Activated CD4-positive, alpha-beta T cell treated with anti-CD3 and anti-CD28 coated beads for 36 hours (primary cell): ENCODE measurements at regions of chr7 and their contacts with region 1.

Region 1: GRCh38 chr7:100673300-100673941 is at the start of gene GNB2:
- DNase-seq: peak; percentile 99
- ATAC-seq: peak; percentile 78
- H3K4me3 Mint-ChIP-seq: peak within 1 kb of the TSS; percentile 94
- H3K27ac Mint-ChIP-seq: peak within 1 kb of the TSS; percentile 93
- H3K4me1 Mint-ChIP-seq: peaks cover 12% of the 10 kb centered on the region
- H3K27me3 Mint-ChIP-seq: no peaks in the 10 kb centered on the region
- total RNA-seq, gene GNB2: 172 to 200 TPM

Region 2: DNA sequence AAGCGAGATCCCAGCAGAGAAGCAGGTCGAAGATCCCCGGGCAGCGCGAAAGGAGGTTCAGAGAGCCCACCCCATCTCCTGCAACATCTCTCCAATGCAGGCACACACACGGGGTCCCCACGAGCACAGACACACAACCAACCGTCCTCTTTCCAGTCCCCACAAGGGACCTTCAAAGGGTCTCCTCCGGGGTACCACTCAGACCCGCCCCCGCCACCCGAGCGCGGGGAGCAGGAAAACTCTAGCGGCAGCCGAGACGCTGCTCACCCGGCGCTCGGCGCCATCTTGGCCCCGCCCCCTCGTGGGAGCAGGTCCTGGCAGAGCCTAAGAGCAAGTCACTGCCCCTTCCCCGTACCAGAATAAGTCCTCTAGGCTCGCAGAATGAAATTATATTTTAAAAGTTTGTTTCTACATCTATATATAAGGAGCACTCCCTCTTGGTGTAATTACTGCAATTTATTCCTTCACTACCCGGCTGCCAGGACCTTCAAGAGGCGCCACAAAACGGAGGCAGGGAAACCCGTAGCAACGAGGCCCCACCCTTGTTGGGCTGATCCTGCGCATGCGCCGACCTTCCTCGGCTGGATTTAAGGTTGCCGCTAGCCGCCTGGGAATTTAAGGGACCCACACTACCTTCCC is 554.2 kb before region 1 on chr7 and contains the starts of genes CNPY4 and TAF6:
- CTCF ChIA-PET with region 1: no interaction called
- POLR2A ChIA-PET with region 1: no interaction called
- intact Hi-C with region 1: loop called in 1 of 2 experiments (anchors 1 kb)
- DNase-seq: peak; percentile 97
- ATAC-seq: peak; percentile 68
- H3K4me3 Mint-ChIP-seq: peak within 1 kb of the TSS; percentile 86
- H3K27ac Mint-ChIP-seq: peak within 1 kb of the TSS; percentile 94
- H3K4me1 Mint-ChIP-seq: peaks cover 19% of the 10 kb centered on the region
- H3K27me3 Mint-ChIP-seq: no peaks in the 10 kb centered on the region
- total RNA-seq, gene CNPY4: 11.0 to 14.0 TPM
- total RNA-seq, gene TAF6: 54.3 to 59.5 TPM

Region 3: DNA sequence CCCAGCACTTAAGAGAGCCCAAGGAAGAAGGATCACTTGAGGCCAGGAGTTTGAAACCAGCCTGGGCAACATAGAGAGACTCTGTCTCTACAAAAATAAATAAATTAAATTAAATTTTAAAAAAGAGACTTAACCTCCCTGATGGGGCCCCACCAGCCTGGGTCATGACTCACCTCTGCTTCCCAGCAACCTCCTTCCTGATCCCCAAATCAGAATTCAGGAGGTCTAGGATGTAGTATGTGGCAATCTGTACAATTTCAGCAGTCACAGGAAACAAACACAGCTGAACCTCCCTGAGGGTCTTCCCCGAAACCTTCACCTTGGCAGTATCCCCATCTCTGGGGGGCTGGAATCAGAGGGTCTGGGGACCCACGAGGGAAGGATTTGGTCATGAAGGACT is 227.4 kb before region 1 on chr7:
- CTCF ChIA-PET with region 1: no interaction called
- POLR2A ChIA-PET with region 1: no interaction called
- intact Hi-C with region 1: no loop called
- DNase-seq: no peak
- ATAC-seq: no peak
- H3K4me3 Mint-ChIP-seq: no peak overlapping the region
- H3K27ac Mint-ChIP-seq: no peak overlapping the region
- H3K4me1 Mint-ChIP-seq: peaks cover 15% of the 10 kb centered on the region
- H3K27me3 Mint-ChIP-seq: no peaks in the 10 kb centered on the region

Region 4: GRCh38 chr7:100604028-100604975 is 69.1 kb before region 1 on chr7:
- CTCF ChIA-PET with region 1: no interaction called
- POLR2A ChIA-PET with region 1: no interaction called
- intact Hi-C with region 1: loop called in 1 of 2 experiments (anchors 1 kb)
- DNase-seq: peak; percentile 85
- ATAC-seq: peak; percentile 70
- H3K4me3 Mint-ChIP-seq: peak overlapping the region; percentile 78
- H3K27ac Mint-ChIP-seq: peak overlapping the region; percentile 82
- H3K4me1 Mint-ChIP-seq: peaks cover 15% of the 10 kb centered on the region
- H3K27me3 Mint-ChIP-seq: peaks cover 3% of the 10 kb centered on the region

Region 5: GRCh38 chr7:100632951-100633717 is 40.3 kb before region 1 on chr7:
- CTCF ChIA-PET with region 1: interaction called, 6 read pairs
- POLR2A ChIA-PET with region 1: interaction called, 4 read pairs
- intact Hi-C with region 1: loop called in 1 of 2 experiments (anchors 1 kb)
- DNase-seq: peak; percentile 80
- ATAC-seq: peak; percentile 75
- H3K4me3 Mint-ChIP-seq: peak overlapping the region; percentile 80
- H3K27ac Mint-ChIP-seq: peak overlapping the region; percentile 92
- H3K4me1 Mint-ChIP-seq: peaks cover 18% of the 10 kb centered on the region
- H3K27me3 Mint-ChIP-seq: no peaks in the 10 kb centered on the region

Region 6: GRCh38 chr7:100874577-100875355 is 201.3 kb after region 1 on chr7 and contains the start of gene SRRT:
- CTCF ChIA-PET with region 1: no interaction called
- POLR2A ChIA-PET with region 1: no interaction called
- intact Hi-C with region 1: loop called in 1 of 2 experiments (anchors 1 kb)
- DNase-seq: peak; percentile 99
- ATAC-seq: peak; percentile 95
- H3K4me3 Mint-ChIP-seq: peak within 1 kb of the TSS; percentile 99
- H3K27ac Mint-ChIP-seq: peak within 1 kb of the TSS; percentile 99
- H3K4me1 Mint-ChIP-seq: peaks cover 45% of the 10 kb centered on the region
- H3K27me3 Mint-ChIP-seq: no peaks in the 10 kb centered on the region
- total RNA-seq, gene SRRT: 253 to 260 TPM